ENCODE measurements at regions of chr12 and their contacts with region 1.

Region 1: GRCh38 chr12:57899010-57899662 is 42.2 kb upstream of the ATP23 start:
- DNase-seq: peak in 2 of 4 donors; percentile 57 to 82
- ATAC-seq: peak; percentile 28
- H3K4me3 ChIP-seq: no peak overlapping the region
- H3K27ac ChIP-seq: peak overlapping the region; percentile 93 to 96
- H3K4me1 ChIP-seq: peaks cover 46 to 52% of the 10 kb centered on the region in 2 donors
- H3K27me3 ChIP-seq: peaks cover 0 to 11% of the 10 kb centered on the region in 2 donors
- CTCF ChIP-seq: no peak

Region 2: GRCh38 chr12:57182921-57183790 is 716.0 kb before region 1 on chr12:
- intact Hi-C with region 1: no loop called
- DNase-seq: peak in 3 of 4 donors; percentile 56 to 74 (median 74)
- ATAC-seq: peak; percentile 91
- H3K4me3 ChIP-seq: no peak overlapping the region
- H3K27ac ChIP-seq: no peak overlapping the region
- H3K4me1 ChIP-seq: no peaks in the 10 kb centered on the region
- H3K27me3 ChIP-seq: no peaks in the 10 kb centered on the region
- CTCF ChIP-seq: peak; percentile 71 to 92

Region 3: GRCh38 chr12:57272337-57273151 is 626.6 kb before region 1 on chr12:
- intact Hi-C with region 1: no loop called
- DNase-seq: no peak
- ATAC-seq: peak; percentile 30
- H3K4me3 ChIP-seq: no peak overlapping the region
- H3K27ac ChIP-seq: no peak overlapping the region
- H3K4me1 ChIP-seq: peaks cover 0 to 8% of the 10 kb centered on the region in 2 donors
- H3K27me3 ChIP-seq: no peaks in the 10 kb centered on the region
- CTCF ChIP-seq: no peak

Region 4: GRCh38 chr12:57751788-57752667 is 147.1 kb before region 1 on chr12 and contains the start of gene CDK4:
- intact Hi-C with region 1: no loop called
- DNase-seq: peak; percentile 98 to 100 (median 100)
- ATAC-seq: peak; percentile 83
- H3K4me3 ChIP-seq: peak within 1 kb of the TSS; percentile 67 to 75
- H3K27ac ChIP-seq: peak within 1 kb of the TSS; percentile 85 to 87
- H3K4me1 ChIP-seq: peaks cover 10 to 57% of the 10 kb centered on the region in 2 donors
- H3K27me3 ChIP-seq: peaks cover 0 to 12% of the 10 kb centered on the region in 2 donors
- CTCF ChIP-seq: no peak
- polyA plus RNA-seq, gene CDK4: 215 to 269 (median 245) TPM

Region 5: GRCh38 chr12:57822392-57823130 is 76.6 kb before region 1 on chr12:
- intact Hi-C with region 1: loop called in 1 of 2 experiments (anchors 10 kb)
- DNase-seq: no peak
- ATAC-seq: no peak
- H3K4me3 ChIP-seq: no peak overlapping the region
- H3K27ac ChIP-seq: peak overlapping the region; percentile 44 to 69
- H3K4me1 ChIP-seq: peaks cover 2 to 45% of the 10 kb centered on the region in 2 donors
- H3K27me3 ChIP-seq: no peaks in the 10 kb centered on the region
- CTCF ChIP-seq: no peak

Region 6: GRCh38 chr12:57832966-57833365 is 66.2 kb before region 1 on chr12:
- intact Hi-C with region 1: loop called (anchors 5 to 10 kb)
- DNase-seq: no peak
- ATAC-seq: peak; percentile 44
- H3K4me3 ChIP-seq: no peak overlapping the region
- H3K27ac ChIP-seq: peak overlapping the region; percentile 53 to 60
- H3K4me1 ChIP-seq: peaks cover 86 to 96% of the 10 kb centered on the region in 2 donors
- H3K27me3 ChIP-seq: no peaks in the 10 kb centered on the region
- CTCF ChIP-seq: no peak